Activated CD4-positive, alpha-beta memory T cell treated with anti-CD3 and anti-CD28 coated beads for 36 hours (primary cell): ENCODE measurements at regions of chr11 and their contacts with region 1.

Region 1: GRCh38 chr11:67353317-67354074 is at the start of gene POLD4:
- DNase-seq: peak; percentile 98
- H3K4me3 Mint-ChIP-seq: peak within 1 kb of the TSS; percentile 93
- H3K27ac Mint-ChIP-seq: peak within 1 kb of the TSS; percentile 98
- H3K4me1 Mint-ChIP-seq: peaks cover 44% of the 10 kb centered on the region
- H3K27me3 Mint-ChIP-seq: no peaks in the 10 kb centered on the region
- total RNA-seq, gene POLD4: 62.0 to 67.4 TPM

Region 2: GRCh38 chr11:66328307-66329144 is 1025.0 kb before region 1 on chr11:
- CTCF ChIA-PET with region 1: no interaction called
- POLR2A ChIA-PET with region 1: no interaction called
- intact Hi-C with region 1: no loop called
- DNase-seq: peak; percentile 90
- H3K4me3 Mint-ChIP-seq: no peak overlapping the region
- H3K27ac Mint-ChIP-seq: peak overlapping the region; percentile 40
- H3K4me1 Mint-ChIP-seq: peaks cover 27% of the 10 kb centered on the region
- H3K27me3 Mint-ChIP-seq: no peaks in the 10 kb centered on the region

Region 3: DNA sequence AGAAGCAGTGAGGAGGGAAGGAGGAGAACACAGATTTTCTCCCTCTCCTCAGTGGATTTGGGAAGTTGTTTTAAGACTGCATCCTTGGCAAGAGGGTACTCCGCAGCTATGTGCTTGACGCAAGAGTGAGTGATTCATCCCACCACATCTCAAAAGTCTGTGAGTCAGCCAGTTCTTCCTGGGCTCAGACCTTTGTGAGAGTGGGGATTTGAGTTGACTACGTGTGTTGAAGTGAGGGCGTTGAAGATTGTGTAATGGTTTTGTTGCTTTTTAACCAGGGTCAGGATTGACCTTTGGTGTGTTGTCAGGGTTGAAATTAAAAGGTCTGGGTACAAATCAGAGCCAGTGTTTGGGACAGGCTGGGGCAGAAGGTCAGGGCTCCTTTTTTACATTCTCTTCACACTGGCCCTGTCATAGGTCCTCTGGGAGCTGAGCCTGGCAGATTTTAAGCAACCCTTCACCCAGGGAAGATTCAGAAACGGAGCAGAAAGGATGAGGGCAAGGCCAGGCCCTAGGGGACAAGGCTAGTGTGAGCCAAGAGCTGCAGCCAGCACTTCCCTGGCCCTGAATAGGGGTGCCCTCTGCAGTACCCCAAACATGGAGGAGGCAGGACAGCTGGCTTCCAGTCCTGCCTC is 382.6 kb before region 1 on chr11:
- CTCF ChIA-PET with region 1: no interaction called
- POLR2A ChIA-PET with region 1: no interaction called
- intact Hi-C with region 1: no loop called
- DNase-seq: peak; percentile 64
- H3K4me3 Mint-ChIP-seq: no peak overlapping the region
- H3K27ac Mint-ChIP-seq: peak overlapping the region; percentile 25
- H3K4me1 Mint-ChIP-seq: peaks cover 15% of the 10 kb centered on the region
- H3K27me3 Mint-ChIP-seq: peaks cover 7% of the 10 kb centered on the region

Region 4: DNA sequence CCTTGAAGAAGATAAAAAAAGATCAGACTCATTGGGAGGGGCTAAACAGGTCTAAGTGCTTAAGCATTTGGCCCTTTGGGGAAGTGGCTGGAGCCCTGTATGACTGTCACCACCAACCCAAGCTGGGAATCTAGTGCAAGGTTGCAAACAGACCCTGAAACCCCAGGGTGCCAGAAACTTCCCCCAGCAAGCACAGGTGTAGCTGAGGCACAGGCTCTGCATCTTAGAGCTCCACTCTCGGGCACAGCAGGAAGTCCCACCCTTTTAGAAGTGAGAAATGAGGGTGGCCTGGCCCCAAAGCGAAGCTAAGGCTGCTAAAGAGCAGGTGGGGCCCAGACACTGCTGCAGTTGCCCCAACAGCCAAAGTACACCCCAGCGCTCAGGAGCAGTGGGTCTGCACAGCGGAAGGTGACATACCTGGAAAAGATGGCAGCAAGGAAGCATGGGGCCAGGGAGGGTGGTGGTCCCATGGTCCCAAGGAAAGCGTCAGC is 240.2 kb before region 1 on chr11:
- CTCF ChIA-PET with region 1: no interaction called
- POLR2A ChIA-PET with region 1: no interaction called
- intact Hi-C with region 1: no loop called
- DNase-seq: no peak
- H3K4me3 Mint-ChIP-seq: no peak overlapping the region
- H3K27ac Mint-ChIP-seq: no peak overlapping the region
- H3K4me1 Mint-ChIP-seq: peaks cover 3% of the 10 kb centered on the region
- H3K27me3 Mint-ChIP-seq: no peaks in the 10 kb centered on the region

Region 5: GRCh38 chr11:67239783-67240575 is 113.5 kb before region 1 on chr11:
- CTCF ChIA-PET with region 1: interaction called, 4 read pairs
- POLR2A ChIA-PET with region 1: interaction called, 12 read pairs
- intact Hi-C with region 1: no loop called
- DNase-seq: peak; percentile 99
- H3K4me3 Mint-ChIP-seq: peak overlapping the region; percentile 97
- H3K27ac Mint-ChIP-seq: peak overlapping the region; percentile 100
- H3K4me1 Mint-ChIP-seq: peaks cover 43% of the 10 kb centered on the region
- H3K27me3 Mint-ChIP-seq: no peaks in the 10 kb centered on the region

Region 6: GRCh38 chr11:67332081-67332691 is 21.3 kb before region 1 on chr11:
- CTCF ChIA-PET with region 1: interaction called, 10 read pairs
- POLR2A ChIA-PET with region 1: no interaction called
- intact Hi-C with region 1: no loop called
- DNase-seq: no peak
- H3K4me3 Mint-ChIP-seq: no peak overlapping the region
- H3K27ac Mint-ChIP-seq: no peak overlapping the region
- H3K4me1 Mint-ChIP-seq: no peaks in the 10 kb centered on the region
- H3K27me3 Mint-ChIP-seq: no peaks in the 10 kb centered on the region

Region 7: GRCh38 chr11:67382276-67383136 is 29.0 kb after region 1 on chr11:
- CTCF ChIA-PET with region 1: interaction called, 995 read pairs
- POLR2A ChIA-PET with region 1: interaction called, 14 read pairs
- intact Hi-C with region 1: loop called (anchors 1 kb)
- DNase-seq: peak; percentile 90
- H3K4me3 Mint-ChIP-seq: no peak overlapping the region
- H3K27ac Mint-ChIP-seq: no peak overlapping the region
- H3K4me1 Mint-ChIP-seq: peaks cover 6% of the 10 kb centered on the region
- H3K27me3 Mint-ChIP-seq: no peaks in the 10 kb centered on the region

Region 8: GRCh38 chr11:67433536-67434394 is 80.3 kb after region 1 on chr11:
- CTCF ChIA-PET with region 1: interaction called, 4 read pairs
- POLR2A ChIA-PET with region 1: no interaction called
- intact Hi-C with region 1: loop called (anchors 1 kb)
- DNase-seq: peak; percentile 54
- H3K4me3 Mint-ChIP-seq: peak overlapping the region; percentile 49
- H3K27ac Mint-ChIP-seq: peak overlapping the region; percentile 81
- H3K4me1 Mint-ChIP-seq: peaks cover 47% of the 10 kb centered on the region
- H3K27me3 Mint-ChIP-seq: no peaks in the 10 kb centered on the region

Region 9: DNA sequence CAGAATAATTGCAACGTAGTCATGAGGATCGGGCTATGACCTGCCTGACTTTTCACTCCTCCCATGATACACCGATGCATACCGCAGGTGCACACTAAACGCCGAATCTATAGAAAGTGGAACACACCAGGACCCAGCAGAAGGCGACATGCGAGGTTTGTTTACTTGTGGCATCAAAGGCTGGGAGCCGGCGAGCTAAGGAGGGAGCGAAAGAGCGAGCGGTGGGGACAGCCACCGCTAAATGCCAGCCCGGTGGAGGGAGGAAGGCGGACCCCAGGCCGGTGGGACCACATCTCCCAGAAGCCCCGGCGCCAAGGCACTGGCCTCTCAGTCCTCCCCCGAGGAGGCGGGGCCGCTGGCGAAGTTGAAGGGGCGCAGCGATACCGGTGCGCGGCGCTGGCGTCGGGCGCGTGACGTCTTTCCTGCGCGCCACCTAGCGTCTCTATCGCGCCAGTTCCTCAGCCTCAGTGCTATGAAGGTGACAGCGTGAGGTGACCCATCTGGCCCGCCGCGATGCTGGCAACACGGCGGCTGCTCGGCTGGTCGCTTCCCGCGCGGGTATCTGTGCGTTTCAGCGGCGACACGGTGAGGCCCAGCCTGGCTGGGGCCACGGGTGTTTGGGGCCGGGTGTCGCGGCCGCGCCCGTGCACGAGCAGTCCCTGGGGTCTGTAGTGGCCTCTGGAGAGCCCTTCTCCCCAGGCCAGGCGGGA is 253.2 kb after region 1 on chr11 and contains the start of gene NDUFV1:
- CTCF ChIA-PET with region 1: no interaction called
- POLR2A ChIA-PET with region 1: no interaction called
- intact Hi-C with region 1: no loop called
- DNase-seq: peak; percentile 98
- H3K4me3 Mint-ChIP-seq: peak within 1 kb of the TSS; percentile 85
- H3K27ac Mint-ChIP-seq: peak within 1 kb of the TSS; percentile 76
- H3K4me1 Mint-ChIP-seq: peaks cover 13% of the 10 kb centered on the region
- H3K27me3 Mint-ChIP-seq: peaks cover 6% of the 10 kb centered on the region
- total RNA-seq, gene NDUFV1: 279 to 287 TPM